ENCODE measurements at regions of chr6 and their contacts with region 1.

Region 1: GRCh38 chr6:42043787-42044475 is 6.4 kb upstream of the TAF8 start:
- DNase-seq: peak; percentile 79
- ATAC-seq: peak; percentile 76
- H3K4me3 ChIP-seq: no peak overlapping the region
- H3K27ac ChIP-seq: no peak overlapping the region
- H3K4me1 ChIP-seq: peaks cover 21% of the 10 kb centered on the region
- H3K27me3 ChIP-seq: no peaks in the 10 kb centered on the region; the same call in 1 of the 2 replicates
- CTCF ChIP-seq: peak; percentile 96
- POLR2A ChIP-seq: peak; percentile 66
- RAD21 ChIP-seq: peak; percentile 99

Region 2: GRCh38 chr6:41779793-41780545 is 264.0 kb before region 1 on chr6 and contains the start of gene FRS3:
- CTCF ChIA-PET with region 1: no interaction called
- POLR2A ChIA-PET with region 1: no interaction called
- dilution Hi-C with region 1: no loop called
- in situ Hi-C with region 1: loop called (anchors 5 kb)
- intact Hi-C with region 1: loop called (anchors 1 kb)
- DNase-seq: peak; percentile 92
- ATAC-seq: peak; percentile 95
- H3K4me3 ChIP-seq: peak within 1 kb of the TSS; percentile 54
- H3K27ac ChIP-seq: peak within 1 kb of the TSS; percentile 38
- H3K4me1 ChIP-seq: peaks cover 9% of the 10 kb centered on the region
- H3K27me3 ChIP-seq: no peaks in the 10 kb centered on the region
- CTCF ChIP-seq: peak; percentile 97
- POLR2A ChIP-seq: no peak
- RAD21 ChIP-seq: peak; percentile 94
- total RNA-seq, gene FRS3: 0.28 and 0.54 TPM in 2 replicates

Region 3: GRCh38 chr6:41846666-41847237 is 197.2 kb before region 1 on chr6:
- CTCF ChIA-PET with region 1: interaction called, 6 read pairs
- POLR2A ChIA-PET with region 1: no interaction called
- dilution Hi-C with region 1: no loop called
- in situ Hi-C with region 1: loop called (anchors 5 kb)
- intact Hi-C with region 1: loop called (anchors 1 kb)
- DNase-seq: peak; percentile 94
- ATAC-seq: peak; percentile 98
- H3K4me3 ChIP-seq: no peak overlapping the region
- H3K27ac ChIP-seq: peak overlapping the region; percentile 83; the same call in 1 of the 2 replicates
- H3K4me1 ChIP-seq: peaks cover 2% of the 10 kb centered on the region; the same call in 1 of the 2 replicates
- H3K27me3 ChIP-seq: no peaks in the 10 kb centered on the region
- CTCF ChIP-seq: peak; percentile 88
- POLR2A ChIP-seq: no peak
- RAD21 ChIP-seq: peak; percentile 82

Region 4: DNA sequence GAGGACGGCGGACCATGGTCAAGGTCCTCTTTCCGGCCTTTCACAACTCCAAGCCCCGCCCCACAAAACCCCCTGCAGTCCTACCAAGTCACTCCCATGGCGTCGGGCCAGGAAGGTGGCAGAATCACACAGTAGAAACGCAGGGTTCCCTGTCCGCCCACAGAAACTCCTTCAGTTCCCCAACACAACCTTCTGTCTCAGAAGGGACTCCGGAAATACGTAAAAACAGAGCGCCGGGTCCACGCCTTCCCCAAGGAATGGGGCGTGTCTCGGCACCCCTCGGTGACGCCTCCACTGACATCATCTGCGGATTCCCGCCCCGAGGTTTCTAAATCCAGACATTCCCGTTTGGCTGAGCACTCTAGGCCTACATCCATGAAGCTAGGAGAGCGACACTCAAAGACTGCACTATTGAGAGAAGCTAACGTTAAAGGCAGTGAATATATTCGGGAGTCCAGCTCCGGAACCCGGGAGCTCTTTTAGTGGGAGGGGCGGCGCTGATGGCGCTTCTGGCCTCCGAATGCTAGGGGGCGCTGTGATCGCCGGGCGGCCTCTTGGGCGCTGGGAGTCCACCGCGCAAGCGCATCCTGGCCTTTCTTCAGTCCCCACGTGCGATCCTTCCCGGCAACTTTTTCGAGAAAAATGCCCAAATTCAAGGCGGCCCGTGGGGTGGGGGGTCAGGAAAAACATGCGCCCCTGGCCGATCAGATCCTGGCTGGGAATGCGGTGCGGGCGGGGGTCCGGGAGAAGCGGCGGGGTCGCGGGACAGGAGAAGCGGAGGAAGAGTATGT is 122.8 kb before region 1 on chr6 and contains the starts of genes BYSL and MED20:
- CTCF ChIA-PET with region 1: interaction called, 5 read pairs
- POLR2A ChIA-PET with region 1: no interaction called
- dilution Hi-C with region 1: loop called (anchors 10 kb)
- in situ Hi-C with region 1: no loop called
- intact Hi-C with region 1: loop called (anchors 5 kb)
- DNase-seq: peak; percentile 94
- ATAC-seq: peak; percentile 89
- H3K4me3 ChIP-seq: peak within 1 kb of the TSS; percentile 93
- H3K27ac ChIP-seq: peak within 1 kb of the TSS; percentile 99
- H3K4me1 ChIP-seq: peaks cover 10% of the 10 kb centered on the region
- H3K27me3 ChIP-seq: no peaks in the 10 kb centered on the region
- CTCF ChIP-seq: peak; percentile 95
- POLR2A ChIP-seq: peak; percentile 78
- RAD21 ChIP-seq: no peak
- total RNA-seq, gene BYSL: 25.3 and 26.7 TPM in 2 replicates
- total RNA-seq, gene MED20: 35.6 and 38.2 TPM in 2 replicates

Region 5: GRCh38 chr6:41941280-41942066 is 102.5 kb before region 1 on chr6 and contains the start of gene CCND3:
- CTCF ChIA-PET with region 1: interaction called, 4 read pairs
- POLR2A ChIA-PET with region 1: no interaction called
- dilution Hi-C with region 1: no loop called
- in situ Hi-C with region 1: loop called (anchors 5 kb)
- intact Hi-C with region 1: loop called (anchors 1 kb)
- DNase-seq: peak; percentile 91
- ATAC-seq: peak; percentile 92
- H3K4me3 ChIP-seq: peak within 1 kb of the TSS; percentile 84
- H3K27ac ChIP-seq: peak within 1 kb of the TSS; percentile 76
- H3K4me1 ChIP-seq: peaks cover 27% of the 10 kb centered on the region
- H3K27me3 ChIP-seq: no peaks in the 10 kb centered on the region
- CTCF ChIP-seq: no peak
- POLR2A ChIP-seq: no peak; the same call in 1 of the 2 replicates
- RAD21 ChIP-seq: no peak
- total RNA-seq, gene CCND3: 19.2 and 19.4 TPM in 2 replicates

Region 6: GRCh38 chr6:41996997-41997396 is 46.9 kb before region 1 on chr6:
- CTCF ChIA-PET with region 1: no interaction called
- POLR2A ChIA-PET with region 1: no interaction called
- dilution Hi-C with region 1: no loop called
- in situ Hi-C with region 1: no loop called
- intact Hi-C with region 1: no loop called
- DNase-seq: no peak
- ATAC-seq: no peak
- H3K4me3 ChIP-seq: no peak overlapping the region
- H3K27ac ChIP-seq: no peak overlapping the region
- H3K4me1 ChIP-seq: no peaks in the 10 kb centered on the region
- H3K27me3 ChIP-seq: no peaks in the 10 kb centered on the region
- CTCF ChIP-seq: no peak
- POLR2A ChIP-seq: no peak
- RAD21 ChIP-seq: no peak

Region 7: DNA sequence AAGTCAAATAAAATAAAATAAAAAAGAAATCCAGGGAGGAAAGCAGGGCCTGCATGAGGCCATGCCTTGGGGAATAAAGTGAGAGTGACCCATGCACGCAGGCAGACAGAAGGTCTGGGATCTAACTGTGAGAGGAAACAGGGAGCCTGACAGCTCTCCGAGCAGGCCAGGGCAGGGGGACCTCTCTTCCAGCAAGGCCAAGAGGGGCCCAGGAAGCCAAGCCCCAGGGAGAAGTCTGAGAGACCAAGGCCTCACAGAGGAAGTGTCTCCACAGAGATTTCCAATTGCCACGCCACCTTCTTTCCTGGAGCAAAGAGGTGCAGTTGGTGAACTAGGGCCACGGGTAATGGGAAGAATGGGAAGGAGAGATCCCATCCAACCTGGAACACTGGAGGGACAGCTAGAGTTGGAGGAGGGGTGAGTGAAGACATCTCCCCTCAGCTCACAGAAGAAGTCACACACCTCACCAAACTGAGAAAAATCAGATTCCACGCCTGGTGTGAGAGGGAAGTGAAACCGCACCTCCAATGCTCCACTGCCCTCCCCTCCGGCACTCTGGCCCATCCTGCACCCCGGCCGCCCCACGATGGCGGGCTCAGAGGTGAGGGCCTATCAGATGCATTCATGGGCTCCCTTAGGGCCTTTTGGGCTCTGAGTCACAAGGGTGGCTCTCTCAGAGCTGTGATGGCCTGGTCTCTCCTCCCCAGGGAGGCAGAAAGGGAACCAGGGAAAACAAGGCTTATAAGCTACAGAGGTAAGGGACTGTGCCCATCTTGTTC is 18.7 kb before region 1 on chr6:
- CTCF ChIA-PET with region 1: no interaction called
- POLR2A ChIA-PET with region 1: no interaction called
- dilution Hi-C with region 1: no loop called
- in situ Hi-C with region 1: no loop called
- intact Hi-C with region 1: no loop called
- DNase-seq: no peak
- ATAC-seq: no peak
- H3K4me3 ChIP-seq: no peak overlapping the region
- H3K27ac ChIP-seq: no peak overlapping the region
- H3K4me1 ChIP-seq: peaks cover 4% of the 10 kb centered on the region; the same call in 1 of the 2 replicates
- H3K27me3 ChIP-seq: no peaks in the 10 kb centered on the region
- CTCF ChIP-seq: no peak
- POLR2A ChIP-seq: no peak
- RAD21 ChIP-seq: no peak